Activated CD4-positive, alpha-beta memory T cell treated with anti-CD3 and anti-CD28 coated beads, Interleukin-2, amount 10 ng/mL, durations not matched to agents 7 days and 5 days (primary cell): ENCODE measurements at regions of chr1 and their contacts with region 1.

Region 1: GRCh38 chr1:52636721-52637695 is 4.0 kb downstream of the SHISAL2A start:
- DNase-seq: peak; percentile 78
- H3K4me3 Mint-ChIP-seq: peak overlapping the region; percentile 59
- H3K27ac Mint-ChIP-seq: peak overlapping the region; percentile 98
- H3K4me1 Mint-ChIP-seq: peaks cover 70% of the 10 kb centered on the region
- H3K27me3 Mint-ChIP-seq: peaks cover 10% of the 10 kb centered on the region

Region 2: DNA sequence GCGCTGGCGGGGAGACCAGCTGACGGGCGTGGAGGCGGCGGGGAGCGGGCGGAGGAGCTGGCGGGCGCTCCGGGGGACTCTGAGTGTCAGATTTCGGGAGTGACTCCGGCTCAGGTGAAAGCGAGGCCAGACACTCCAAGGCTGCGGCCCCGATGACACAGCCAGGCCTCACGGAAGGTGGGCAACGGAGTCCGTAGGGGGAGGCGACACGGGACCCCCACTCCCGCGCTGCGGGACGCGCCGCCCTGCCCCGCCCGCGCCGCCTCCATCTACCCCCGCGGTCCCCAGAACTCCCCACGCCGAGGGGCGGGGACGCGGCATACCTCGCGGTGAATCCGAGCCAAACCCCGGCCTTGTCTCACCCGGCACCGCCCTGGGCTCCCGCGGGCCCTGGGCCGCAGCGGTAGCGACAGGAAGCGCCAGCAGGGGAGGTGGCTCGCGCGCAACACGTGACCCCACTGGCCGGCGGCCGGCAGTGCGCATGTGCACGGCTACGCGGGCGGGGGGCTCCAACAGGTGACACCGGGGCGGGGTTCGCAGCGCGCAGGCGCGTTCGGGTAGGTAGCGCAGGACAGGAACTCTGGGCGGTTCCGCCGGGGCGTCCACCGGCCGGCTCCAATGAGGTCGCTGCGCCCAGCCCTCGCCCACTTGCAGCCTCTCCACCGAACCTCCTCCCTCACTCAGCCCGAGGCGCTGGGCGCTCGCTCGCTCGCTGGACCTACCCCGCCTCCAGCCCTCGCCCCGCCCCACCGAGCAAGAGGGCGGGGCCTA is 271.1 kb before region 1 on chr1 and contains the start of gene CC2D1B:
- CTCF ChIA-PET with region 1: interaction called, 5 read pairs
- POLR2A ChIA-PET with region 1: interaction called, 11 read pairs
- DNase-seq: peak; percentile 100
- H3K4me3 Mint-ChIP-seq: peak within 1 kb of the TSS; percentile 97
- H3K27ac Mint-ChIP-seq: peak within 1 kb of the TSS; percentile 96
- H3K4me1 Mint-ChIP-seq: peaks cover 46% of the 10 kb centered on the region
- H3K27me3 Mint-ChIP-seq: no peaks in the 10 kb centered on the region
- total RNA-seq, gene CC2D1B: 43.8 to 46.9 TPM

Region 3: DNA sequence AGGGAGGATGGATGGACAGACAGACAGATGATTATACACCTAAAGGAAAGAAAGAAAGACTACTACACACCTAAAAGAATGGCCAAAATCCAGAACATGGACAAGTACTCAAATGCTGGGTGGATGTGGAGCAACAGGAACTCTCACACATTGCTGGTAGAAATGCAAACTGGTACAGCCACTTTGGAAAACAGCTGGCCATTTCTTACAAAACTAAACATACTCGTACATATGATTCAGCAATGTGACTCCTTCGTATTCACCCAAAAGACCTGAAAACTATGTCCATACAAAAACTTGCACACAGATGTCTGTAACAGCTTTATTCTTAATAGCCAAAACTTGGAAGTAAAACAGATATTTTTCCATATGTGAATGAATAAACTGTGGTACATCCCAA is 181.3 kb before region 1 on chr1:
- CTCF ChIA-PET with region 1: no interaction called
- POLR2A ChIA-PET with region 1: no interaction called
- DNase-seq: no peak
- H3K4me3 Mint-ChIP-seq: no peak overlapping the region
- H3K27ac Mint-ChIP-seq: no peak overlapping the region
- H3K4me1 Mint-ChIP-seq: peaks cover 4% of the 10 kb centered on the region
- H3K27me3 Mint-ChIP-seq: no peaks in the 10 kb centered on the region

Region 4: GRCh38 chr1:52552505-52553361 is 84.3 kb before region 1 on chr1 and contains the start of gene TUT4:
- CTCF ChIA-PET with region 1: no interaction called
- POLR2A ChIA-PET with region 1: interaction called, 21 read pairs
- DNase-seq: peak; percentile 81
- H3K4me3 Mint-ChIP-seq: no peak within 1 kb of the TSS
- H3K27ac Mint-ChIP-seq: peak within 1 kb of the TSS; percentile 3
- H3K4me1 Mint-ChIP-seq: peaks cover 21% of the 10 kb centered on the region
- H3K27me3 Mint-ChIP-seq: no peaks in the 10 kb centered on the region
- total RNA-seq, gene TUT4: 68.1 to 71.8 TPM

Region 5: DNA sequence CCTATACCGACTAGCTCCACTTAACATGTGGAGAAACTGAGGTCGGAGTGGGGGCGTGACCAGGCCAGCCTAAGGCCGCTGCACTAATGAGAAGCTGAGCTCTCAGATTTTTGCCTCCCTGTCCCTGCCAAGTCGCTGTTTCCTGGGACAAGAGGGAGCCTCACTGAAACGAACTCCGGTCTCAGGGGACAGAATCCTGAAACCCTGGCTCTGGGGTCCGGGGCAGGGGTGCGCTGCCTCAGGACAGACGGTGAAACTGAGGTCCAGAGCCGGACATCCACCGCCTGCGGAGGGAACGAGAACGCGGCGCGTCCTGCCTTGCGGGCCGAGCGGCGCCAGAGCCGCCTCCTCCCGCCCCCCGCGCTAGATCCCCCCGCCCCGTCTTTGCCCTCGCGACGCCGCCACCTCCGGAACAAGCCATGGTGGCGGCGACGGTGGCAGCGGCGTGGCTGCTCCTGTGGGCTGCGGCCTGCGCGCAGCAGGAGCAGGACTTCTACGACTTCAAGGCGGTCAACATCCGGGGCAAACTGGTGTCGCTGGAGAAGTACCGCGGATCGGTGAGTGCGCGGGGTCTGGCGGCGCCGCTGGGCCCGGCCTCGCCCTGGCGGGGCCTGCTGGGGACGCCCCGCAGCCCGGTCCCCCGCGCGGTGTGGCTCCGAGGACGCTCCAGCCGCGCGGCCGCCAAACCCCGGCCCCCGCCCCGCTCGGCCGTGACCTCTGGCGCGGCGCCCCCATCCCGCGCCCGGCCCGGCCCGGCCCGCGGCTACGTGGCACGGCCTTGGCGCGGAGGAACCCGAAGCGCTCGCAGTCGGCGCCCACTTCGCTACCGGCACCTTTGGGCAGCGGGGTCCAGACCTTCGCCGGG is 34.8 kb before region 1 on chr1 and contains the start of gene GPX7:
- CTCF ChIA-PET with region 1: no interaction called
- POLR2A ChIA-PET with region 1: interaction called, 17 read pairs
- DNase-seq: peak; percentile 68
- H3K4me3 Mint-ChIP-seq: peak within 1 kb of the TSS; percentile 86
- H3K27ac Mint-ChIP-seq: peak within 1 kb of the TSS; percentile 85
- H3K4me1 Mint-ChIP-seq: peaks cover 35% of the 10 kb centered on the region
- H3K27me3 Mint-ChIP-seq: no peaks in the 10 kb centered on the region
- total RNA-seq, gene GPX7: 21.2 to 23.5 TPM

Region 6: GRCh38 chr1:52651904-52652303 is 14.9 kb after region 1 on chr1:
- CTCF ChIA-PET with region 1: interaction called, 3 read pairs
- POLR2A ChIA-PET with region 1: interaction called, 10 read pairs
- DNase-seq: no peak
- H3K4me3 Mint-ChIP-seq: no peak overlapping the region
- H3K27ac Mint-ChIP-seq: no peak overlapping the region
- H3K4me1 Mint-ChIP-seq: no peaks in the 10 kb centered on the region
- H3K27me3 Mint-ChIP-seq: no peaks in the 10 kb centered on the region

Region 7: GRCh38 chr1:52659356-52659755 is 22.3 kb after region 1 on chr1:
- CTCF ChIA-PET with region 1: no interaction called
- POLR2A ChIA-PET with region 1: interaction called, 27 read pairs
- DNase-seq: peak; percentile 36
- H3K4me3 Mint-ChIP-seq: no peak overlapping the region
- H3K27ac Mint-ChIP-seq: peak overlapping the region; percentile 50
- H3K4me1 Mint-ChIP-seq: peaks cover 17% of the 10 kb centered on the region
- H3K27me3 Mint-ChIP-seq: no peaks in the 10 kb centered on the region